ENCODE measurements at regions of chr3 and their contacts with region 1.

Region 1: DNA sequence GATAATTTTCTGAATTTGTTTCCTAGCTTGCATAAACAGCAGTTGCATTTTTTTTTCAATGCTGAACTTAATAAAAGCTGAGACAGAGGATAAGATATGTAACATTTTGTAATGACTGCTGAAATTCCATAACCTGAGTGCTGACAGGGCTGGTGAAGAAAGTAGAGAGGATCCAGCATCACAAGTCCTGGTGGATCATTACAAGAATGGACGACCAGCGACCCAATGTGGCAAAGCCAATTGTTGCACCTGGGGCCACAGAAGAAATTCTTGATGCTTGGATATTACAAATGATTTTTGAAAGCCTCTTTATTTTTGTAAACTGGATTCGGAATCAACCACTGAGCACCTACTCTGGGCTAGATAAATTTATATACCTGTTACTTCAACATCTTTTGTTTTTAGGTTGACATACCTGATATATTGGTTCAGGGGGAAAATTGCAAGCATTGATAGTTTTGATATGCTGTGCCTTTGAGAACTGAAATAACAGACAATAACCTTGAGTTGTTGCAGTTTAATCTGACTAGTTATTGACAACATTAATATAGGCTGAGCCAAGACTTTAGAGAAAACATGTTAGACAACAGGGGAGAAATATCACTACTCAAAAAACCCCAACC is 3.9 kb upstream of the ACTL6A start:
- DNase-seq: peak; percentile 37 to 52
- ATAC-seq: no peak

Region 2: DNA sequence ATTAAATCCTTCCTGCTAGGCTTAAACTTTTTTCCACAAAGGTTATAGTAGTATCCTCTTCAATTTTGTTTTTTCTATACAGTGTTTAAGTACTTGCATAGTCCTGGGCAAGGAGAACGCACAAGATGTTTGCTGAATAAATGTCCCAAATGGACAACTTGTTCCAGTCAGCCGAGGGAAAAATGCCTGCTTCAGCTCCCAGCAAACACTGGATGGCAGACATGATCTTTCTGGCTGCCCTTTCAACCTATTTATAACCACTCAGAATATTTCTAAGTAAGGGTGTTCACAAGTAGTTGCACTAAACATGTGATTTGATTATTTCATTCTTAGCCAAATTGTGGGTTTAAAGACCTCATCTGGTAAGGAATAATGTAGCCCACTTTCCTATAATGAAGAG is 137.4 kb before region 1 on chr3:
- intact Hi-C with region 1: loop called in 1 of 2 experiments (anchors 5 kb)
- DNase-seq: no peak
- ATAC-seq: no peak

Measured in left colon (tissue), 2 donors.